ENCODE measurements at regions of chr10 and their contacts with region 1.

Region 1: DNA sequence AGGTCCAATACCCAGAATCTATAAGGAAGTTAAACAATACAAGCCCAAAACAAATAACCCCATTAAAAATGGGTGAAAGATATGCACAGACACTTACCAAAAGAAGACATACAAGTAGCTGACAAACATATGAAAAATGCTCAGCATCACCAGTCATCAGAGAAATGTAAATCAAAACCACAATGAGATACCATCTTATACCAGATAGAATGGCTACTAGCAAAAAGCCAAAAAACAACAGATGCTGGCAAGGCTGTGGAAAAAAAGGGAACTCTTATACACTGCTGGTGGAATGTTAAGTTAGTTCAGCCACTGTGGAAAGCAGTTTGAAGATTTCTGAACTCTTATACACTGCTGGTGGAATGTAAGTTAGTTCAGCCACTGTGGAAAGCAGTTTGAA is 331.1 kb downstream of the KIF20B start:
- DNase-seq: no peak
- H3K4me3 ChIP-seq: no peak overlapping the region
- H3K27ac ChIP-seq: no peak overlapping the region
- H3K4me1 ChIP-seq: no peaks in the 10 kb centered on the region
- H3K27me3 ChIP-seq: no peaks in the 10 kb centered on the region
- CTCF ChIP-seq: no peak
- POLR2A ChIP-seq: no peak

Region 2: GRCh38 chr10:89745901-89746300 is 286.6 kb before region 1 on chr10:
- CTCF ChIA-PET with region 1: no interaction called
- POLR2A ChIA-PET with region 1: no interaction called
- dilution Hi-C with region 1: no loop called
- intact Hi-C with region 1: no loop called
- DNase-seq: no peak
- H3K4me3 ChIP-seq: no peak overlapping the region
- H3K27ac ChIP-seq: no peak overlapping the region
- H3K4me1 ChIP-seq: no peaks in the 10 kb centered on the region
- H3K27me3 ChIP-seq: no peaks in the 10 kb centered on the region
- CTCF ChIP-seq: no peak
- POLR2A ChIP-seq: no peak

Region 3: GRCh38 chr10:90062786-90063185 is 30.3 kb after region 1 on chr10:
- CTCF ChIA-PET with region 1: no interaction called
- POLR2A ChIA-PET with region 1: interaction called, 10 read pairs
- dilution Hi-C with region 1: no loop called
- intact Hi-C with region 1: no loop called
- DNase-seq: no peak
- H3K4me3 ChIP-seq: no peak overlapping the region
- H3K27ac ChIP-seq: no peak overlapping the region
- H3K4me1 ChIP-seq: no peaks in the 10 kb centered on the region
- H3K27me3 ChIP-seq: no peaks in the 10 kb centered on the region
- CTCF ChIP-seq: no peak
- POLR2A ChIP-seq: no peak

Region 4: DNA sequence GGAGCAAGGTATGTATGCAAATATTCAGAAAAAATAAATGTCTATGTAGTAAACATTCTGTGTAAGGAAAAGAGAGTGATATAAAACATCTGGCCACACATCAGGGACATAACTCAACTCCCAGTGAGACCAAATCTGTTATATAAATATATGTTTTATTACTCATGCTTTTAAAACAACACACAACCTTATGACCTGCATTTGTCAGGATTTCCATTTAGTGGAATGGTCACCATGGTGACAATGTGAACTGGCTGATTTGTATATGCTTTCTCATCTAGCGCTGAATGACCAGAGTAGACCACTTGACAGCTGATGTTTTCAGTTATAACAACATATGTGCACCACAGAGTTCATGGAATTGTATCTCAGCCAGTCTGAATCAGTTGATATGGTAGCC is 273.7 kb after region 1 on chr10:
- CTCF ChIA-PET with region 1: no interaction called
- POLR2A ChIA-PET with region 1: no interaction called
- dilution Hi-C with region 1: no loop called
- intact Hi-C with region 1: no loop called
- DNase-seq: peak; percentile 98
- H3K4me3 ChIP-seq: no peak overlapping the region
- H3K27ac ChIP-seq: peak overlapping the region; percentile 58
- H3K4me1 ChIP-seq: peaks cover 10% of the 10 kb centered on the region
- H3K27me3 ChIP-seq: no peaks in the 10 kb centered on the region
- CTCF ChIP-seq: no peak
- POLR2A ChIP-seq: no peak

Measured in endothelial cell of umbilical vein (primary cell).